Vagina (tissue), 2 donors: ENCODE measurements at regions of chr7 and their contacts with region 1.

Region 1: GRCh38 chr7:15057272-15057671 is 154.7 kb upstream of the DGKB start:
- DNase-seq: no peak
- H3K4me3 ChIP-seq: no peak overlapping the region
- H3K27ac ChIP-seq: no peak overlapping the region
- H3K4me1 ChIP-seq: no peaks in the 10 kb centered on the region
- H3K27me3 ChIP-seq: no peaks in the 10 kb centered on the region
- CTCF ChIP-seq: no peak
- POLR2A ChIP-seq: no peak

Region 2: GRCh38 chr7:13104128-13104527 is 1953.1 kb before region 1 on chr7:
- intact Hi-C with region 1: loop called (anchors 5 kb)
- DNase-seq: no peak
- H3K4me3 ChIP-seq: no peak overlapping the region
- H3K27ac ChIP-seq: no peak overlapping the region
- H3K4me1 ChIP-seq: no peaks in the 10 kb centered on the region
- H3K27me3 ChIP-seq: no peaks in the 10 kb centered on the region
- CTCF ChIP-seq: no peak
- POLR2A ChIP-seq: no peak

Region 3: GRCh38 chr7:15199482-15199881 is 142.2 kb after region 1 on chr7:
- intact Hi-C with region 1: no loop called
- DNase-seq: no peak
- H3K4me3 ChIP-seq: no peak overlapping the region
- H3K27ac ChIP-seq: no peak overlapping the region
- H3K4me1 ChIP-seq: no peaks in the 10 kb centered on the region
- H3K27me3 ChIP-seq: no peaks in the 10 kb centered on the region
- CTCF ChIP-seq: no peak
- POLR2A ChIP-seq: no peak